Breast epithelium (tissue), 4 donors: ENCODE measurements at regions of chr9 and their contacts with region 1.

Region 1: DNA sequence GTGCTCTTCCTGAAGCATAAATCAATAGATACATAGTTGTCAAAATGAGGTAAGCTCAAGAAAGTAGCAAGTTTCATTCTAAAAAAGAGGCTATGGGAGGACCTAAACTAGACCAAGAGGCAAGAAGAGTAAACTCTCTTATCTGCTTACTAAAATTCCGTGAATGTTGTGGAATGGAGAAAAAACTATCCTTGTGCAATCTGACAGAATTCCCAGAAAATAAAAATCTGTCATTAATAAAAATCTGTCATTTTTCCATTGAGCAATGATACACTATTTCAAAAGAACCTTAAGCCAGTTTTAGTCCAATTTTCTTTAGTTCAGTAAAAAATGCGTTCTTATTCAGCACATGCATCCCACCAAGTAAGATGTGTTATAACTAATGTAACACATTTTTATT is 15.9 kb upstream of the FANCC start:
- DNase-seq: no peak
- H3K4me3 ChIP-seq: no peak overlapping the region
- H3K27ac ChIP-seq: no peak overlapping the region
- H3K4me1 ChIP-seq: no peaks in the 10 kb centered on the region
- H3K27me3 ChIP-seq: no peaks in the 10 kb centered on the region
- CTCF ChIP-seq: no peak
- POLR2A ChIP-seq: no peak

Region 2: DNA sequence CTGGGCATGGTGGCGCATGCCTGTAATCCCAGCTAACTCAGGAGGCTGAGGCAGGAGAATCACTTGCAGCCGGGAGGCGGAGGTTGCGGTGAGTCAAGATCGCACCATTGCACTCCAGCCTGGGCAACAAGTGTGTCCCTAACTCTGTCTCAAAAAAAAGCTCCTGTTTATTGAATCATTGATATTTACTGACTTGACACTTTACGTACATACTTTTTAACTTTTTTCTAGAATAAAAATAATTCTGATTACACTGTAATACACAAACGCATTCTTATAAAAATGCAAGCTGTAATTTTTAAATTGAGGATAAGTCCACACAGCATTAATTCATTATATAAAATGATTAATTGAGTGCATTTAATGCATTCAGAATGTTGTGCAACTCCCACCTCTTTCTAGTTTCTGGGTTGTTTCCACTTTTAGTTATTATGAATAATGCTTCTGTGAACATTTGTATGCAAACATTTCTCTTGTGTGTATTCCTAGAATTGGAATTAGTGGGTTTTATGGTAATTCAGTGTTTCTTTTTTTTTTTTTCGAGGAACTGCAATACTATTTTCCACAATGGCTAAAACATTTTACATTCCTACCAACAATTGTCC is 557.7 kb after region 1 on chr9:
- intact Hi-C with region 1: loop called (anchors 5 kb)
- DNase-seq: no peak
- H3K4me3 ChIP-seq: no peak overlapping the region
- H3K27ac ChIP-seq: no peak overlapping the region
- H3K4me1 ChIP-seq: no peaks in the 10 kb centered on the region
- H3K27me3 ChIP-seq: no peaks in the 10 kb centered on the region
- CTCF ChIP-seq: no peak
- POLR2A ChIP-seq: no peak